ENCODE measurements at regions of chr1 and their contacts with region 1.

Region 1: GRCh38 chr1:161045750-161046571 is at the start of gene USF1:
- H3K4me3 Mint-ChIP-seq: peak within 1 kb of the TSS; percentile 99
- H3K27ac Mint-ChIP-seq: peak within 1 kb of the TSS; percentile 100
- H3K4me1 Mint-ChIP-seq: peaks cover 61% of the 10 kb centered on the region
- H3K27me3 Mint-ChIP-seq: no peaks in the 10 kb centered on the region

Region 2: GRCh38 chr1:160981584-160982411 is 64.2 kb before region 1 on chr1:
- intact Hi-C with region 1: no loop called
- H3K4me3 Mint-ChIP-seq: peak overlapping the region; percentile 56
- H3K27ac Mint-ChIP-seq: no peak overlapping the region
- H3K4me1 Mint-ChIP-seq: peaks cover 15% of the 10 kb centered on the region
- H3K27me3 Mint-ChIP-seq: peaks cover 34% of the 10 kb centered on the region

Region 3: GRCh38 chr1:160997323-160998038 is 48.5 kb before region 1 on chr1:
- intact Hi-C with region 1: loop called (anchors 2 kb)
- H3K4me3 Mint-ChIP-seq: no peak overlapping the region
- H3K27ac Mint-ChIP-seq: peak overlapping the region; percentile 50
- H3K4me1 Mint-ChIP-seq: peaks cover 10% of the 10 kb centered on the region
- H3K27me3 Mint-ChIP-seq: peaks cover 1% of the 10 kb centered on the region

Region 4: GRCh38 chr1:161021165-161021960 is 24.6 kb before region 1 on chr1:
- intact Hi-C with region 1: loop called (anchors 1 kb)
- H3K4me3 Mint-ChIP-seq: peak overlapping the region; percentile 88
- H3K27ac Mint-ChIP-seq: peak overlapping the region; percentile 86
- H3K4me1 Mint-ChIP-seq: peaks cover 50% of the 10 kb centered on the region
- H3K27me3 Mint-ChIP-seq: no peaks in the 10 kb centered on the region

Region 5: GRCh38 chr1:161132410-161133219 is 86.7 kb after region 1 on chr1 and contains the start of gene DEDD:
- intact Hi-C with region 1: loop called (anchors 10 kb)
- H3K4me3 Mint-ChIP-seq: no peak within 1 kb of the TSS
- H3K27ac Mint-ChIP-seq: no peak within 1 kb of the TSS
- H3K4me1 Mint-ChIP-seq: peaks cover 68% of the 10 kb centered on the region
- H3K27me3 Mint-ChIP-seq: no peaks in the 10 kb centered on the region